H1 (cell line): ENCODE measurements at regions of chr2 and their contacts with region 1.

Region 1: DNA sequence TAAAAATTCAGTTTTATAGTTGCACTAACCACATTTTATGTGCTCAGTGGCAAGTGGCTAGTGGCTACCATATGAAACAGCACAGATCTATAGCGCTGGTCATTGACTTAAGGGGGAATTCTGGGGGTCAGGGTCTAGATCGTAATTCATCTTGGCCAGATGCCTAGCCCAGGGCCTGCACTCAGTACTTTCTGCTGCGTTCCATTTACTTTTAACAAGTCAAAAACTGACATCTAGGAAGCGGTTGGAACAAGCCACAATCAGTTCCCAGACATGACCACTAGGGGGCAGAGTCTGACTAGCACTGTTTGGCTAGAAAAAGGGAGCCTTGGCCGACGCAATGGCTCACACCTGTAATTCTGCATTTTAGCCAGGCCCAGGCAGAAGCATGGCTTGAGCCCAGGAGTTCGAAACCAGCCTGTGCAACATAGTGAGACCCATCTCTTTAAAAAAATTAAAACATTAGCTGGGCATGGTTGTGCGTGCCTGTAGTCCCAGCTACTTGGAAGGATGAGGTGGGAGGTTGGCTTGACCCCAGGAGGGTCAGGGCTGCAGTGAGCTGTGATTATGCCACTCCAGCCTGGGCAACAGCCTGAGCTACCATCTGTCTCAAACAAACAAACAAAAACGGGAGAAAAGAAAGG is 9.0 kb upstream of the TMBIM1 start:
- DNase-seq: peak; percentile 76 to 93
- H3K4me3 ChIP-seq: no peak overlapping the region
- H3K27ac ChIP-seq: no peak overlapping the region
- H3K4me1 ChIP-seq: no peaks in the 10 kb centered on the region
- H3K27me3 ChIP-seq: no peaks in the 10 kb centered on the region
- CTCF ChIP-seq: peak; percentile 78 to 96 (median 93)
- EP300 ChIP-seq: no peak
- POLR2A ChIP-seq: no peak
- RAD21 ChIP-seq: peak; percentile 96 to 98

Region 2: GRCh38 chr2:218286570-218287459 is 14.5 kb before region 1 on chr2:
- CTCF ChIA-PET with region 1: interaction called, 25 read pairs
- POLR2A ChIA-PET with region 1: no interaction called
- DNase-seq: peak; percentile 46 to 77
- H3K4me3 ChIP-seq: no peak overlapping the region
- H3K27ac ChIP-seq: no peak overlapping the region
- H3K4me1 ChIP-seq: peaks cover 5 to 11% (median 7%) of the 10 kb centered on the region in 4 experiments; a peak in 4 of 7 replicates
- H3K27me3 ChIP-seq: no peaks in the 10 kb centered on the region
- CTCF ChIP-seq: no peak
- EP300 ChIP-seq: no peak
- POLR2A ChIP-seq: no peak
- RAD21 ChIP-seq: no peak

Region 3: GRCh38 chr2:218322895-218323808 is 21.9 kb after region 1 on chr2:
- CTCF ChIA-PET with region 1: interaction called, 21 read pairs
- POLR2A ChIA-PET with region 1: interaction called, 5 read pairs
- DNase-seq: peak; percentile 79 to 95
- H3K4me3 ChIP-seq: peak overlapping the region; percentile 65 to 81 (median 73)
- H3K27ac ChIP-seq: 0 out of 2 replicates have a peak overlapping the region, but pooled peaks have one; percentile 64
- H3K4me1 ChIP-seq: peaks cover 5 to 28% (median 20%) of the 10 kb centered on the region in 4 experiments
- H3K27me3 ChIP-seq: no peaks in the 10 kb centered on the region
- CTCF ChIP-seq: no peak; a peak in 1 of 4 replicates
- EP300 ChIP-seq: peak in 1 of 2 experiments; percentile 15; a peak in 1 of 3 replicates
- POLR2A ChIP-seq: peak in 1 of 2 experiments; percentile 38; a peak in 1 of 3 replicates
- RAD21 ChIP-seq: no peak

Region 4: DNA sequence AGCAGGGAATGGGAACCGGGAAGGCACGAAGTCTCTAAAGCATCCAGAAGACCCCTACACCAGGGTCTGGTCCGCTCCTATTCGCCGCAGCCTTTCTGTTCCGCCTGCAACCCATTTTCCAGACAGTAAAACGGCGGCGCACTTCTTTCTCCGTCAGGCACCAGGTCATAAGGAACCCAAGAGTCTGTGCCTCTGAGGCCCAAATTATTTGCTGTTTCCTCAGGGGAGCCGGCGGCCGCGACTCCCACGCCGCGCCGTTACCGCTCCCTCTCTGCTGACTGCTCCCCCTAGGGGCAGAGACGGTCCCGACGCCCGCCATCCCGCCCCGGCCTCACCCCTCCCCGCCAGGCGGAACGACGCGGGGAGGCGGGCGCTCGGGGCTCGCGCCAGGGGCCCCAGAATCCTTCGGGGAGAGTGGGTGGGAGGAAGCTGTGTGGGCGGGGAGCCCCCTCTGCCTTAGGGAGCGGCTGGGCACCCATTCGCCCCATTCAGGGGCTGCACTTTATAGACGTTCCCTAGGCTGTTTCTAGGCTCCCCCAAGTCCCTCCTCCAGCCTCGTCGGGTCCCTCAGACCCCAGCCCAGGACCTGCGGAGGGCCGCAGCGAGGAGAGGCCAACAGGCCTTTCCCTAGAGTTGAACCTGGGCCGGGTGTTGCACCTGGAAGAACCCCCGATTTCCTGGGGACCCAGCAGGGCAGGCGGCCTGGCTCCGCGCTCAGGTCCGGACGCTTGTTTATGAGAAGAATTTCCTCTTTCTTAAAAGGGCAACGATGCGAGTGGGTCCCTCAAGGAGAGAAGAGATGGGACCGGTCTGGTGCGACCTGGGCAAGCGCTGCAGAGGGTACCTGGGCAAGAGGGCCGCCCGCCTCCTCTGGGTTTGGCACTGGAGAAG is 94.7 kb after region 1 on chr2:
- CTCF ChIA-PET with region 1: interaction called, 96 read pairs
- POLR2A ChIA-PET with region 1: interaction called, 3 read pairs
- DNase-seq: peak; percentile 71 to 96
- H3K4me3 ChIP-seq: peak overlapping the region; percentile 49 to 77 (median 64)
- H3K27ac ChIP-seq: peak overlapping the region; percentile 94
- H3K4me1 ChIP-seq: peaks cover 0 to 39% (median 25%) of the 10 kb centered on the region in 4 experiments; a peak in 6 of 7 replicates
- H3K27me3 ChIP-seq: peaks cover 22 to 34% (median 31%) of the 10 kb centered on the region in 4 experiments
- CTCF ChIP-seq: peak in 2 of 3 experiments; percentile 70 to 75; a peak in 3 of 4 replicates
- EP300 ChIP-seq: 0 out of 3 replicates have a peak, but pooled peaks of 1 of the 2 experiments have one; percentile 69
- POLR2A ChIP-seq: no peak; a peak in 1 of 3 replicates
- RAD21 ChIP-seq: peak; percentile 60 to 69